ENCODE measurements at regions of chr16 and their contacts with region 1.

Region 1: DNA sequence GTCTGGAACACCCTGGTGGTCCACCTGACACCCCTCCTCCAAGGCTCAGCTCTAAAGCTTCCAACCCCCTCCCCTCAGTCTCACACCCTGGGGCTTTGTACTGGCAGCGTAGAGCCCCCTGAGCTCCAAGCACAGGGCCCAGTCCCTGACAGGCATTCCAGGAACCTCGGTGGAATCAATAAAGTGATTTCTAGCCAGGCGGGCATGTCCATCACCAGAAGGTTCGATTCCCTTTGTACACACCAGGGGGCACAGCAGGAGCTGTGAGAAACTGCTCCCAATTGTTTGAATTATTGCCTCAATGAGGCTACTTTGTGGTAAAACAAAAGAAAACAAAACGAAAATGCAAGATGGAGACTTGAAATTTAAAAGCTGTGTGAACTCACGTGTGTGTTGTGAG is 51.8 kb downstream of the SMPD3 start:
- DNase-seq: peak; percentile 58
- H3K4me3 Mint-ChIP-seq: no peak overlapping the region
- H3K27ac Mint-ChIP-seq: no peak overlapping the region
- H3K4me1 Mint-ChIP-seq: peaks cover 18% of the 10 kb centered on the region
- H3K27me3 Mint-ChIP-seq: peaks cover 14% of the 10 kb centered on the region

Region 2: DNA sequence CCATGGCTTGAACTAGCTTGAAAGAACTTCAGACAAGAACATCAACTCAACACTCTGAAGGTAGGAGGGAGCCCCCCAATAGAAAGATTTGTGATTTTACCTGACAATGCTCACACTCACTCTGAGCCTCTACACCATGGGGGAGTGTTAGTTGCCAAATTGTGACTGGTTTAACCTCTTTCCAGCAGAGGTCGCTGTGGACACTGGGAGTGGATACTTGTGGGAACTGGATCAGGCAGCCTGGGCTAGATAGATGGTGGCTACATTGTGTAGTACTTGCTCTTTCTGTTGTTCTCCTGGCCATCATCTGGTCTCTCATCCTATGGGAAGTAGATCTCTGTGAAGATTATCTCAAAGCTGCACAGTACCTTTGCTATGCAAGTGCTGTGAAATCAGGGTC is 49.0 kb after region 1 on chr16:
- CTCF ChIA-PET with region 1: interaction called, 10 read pairs
- POLR2A ChIA-PET with region 1: no interaction called
- DNase-seq: peak; percentile 68
- H3K4me3 Mint-ChIP-seq: no peak overlapping the region
- H3K27ac Mint-ChIP-seq: no peak overlapping the region
- H3K4me1 Mint-ChIP-seq: peaks cover 14% of the 10 kb centered on the region
- H3K27me3 Mint-ChIP-seq: peaks cover 44% of the 10 kb centered on the region

Region 3: GRCh38 chr16:68520649-68521086 is 124.2 kb after region 1 on chr16:
- CTCF ChIA-PET with region 1: interaction called, 33 read pairs
- POLR2A ChIA-PET with region 1: interaction called, 3 read pairs
- DNase-seq: peak; percentile 87
- H3K4me3 Mint-ChIP-seq: no peak overlapping the region
- H3K27ac Mint-ChIP-seq: no peak overlapping the region
- H3K4me1 Mint-ChIP-seq: peaks cover 6% of the 10 kb centered on the region
- H3K27me3 Mint-ChIP-seq: peaks cover 5% of the 10 kb centered on the region